ENCODE measurements at regions of chr10 and their contacts with region 1.

Region 1: GRCh38 chr10:71378336-71379117 is 18.2 kb upstream of the CDH23 start:
- DNase-seq: no peak
- ATAC-seq: no peak
- H3K4me3 ChIP-seq: no peak overlapping the region
- H3K27ac ChIP-seq: no peak overlapping the region
- H3K4me1 ChIP-seq: peaks cover 12% of the 10 kb centered on the region
- CTCF ChIP-seq: no peak
- EP300 ChIP-seq: no peak
- POLR2A ChIP-seq: no peak
- RAD21 ChIP-seq: no peak

Region 2: DNA sequence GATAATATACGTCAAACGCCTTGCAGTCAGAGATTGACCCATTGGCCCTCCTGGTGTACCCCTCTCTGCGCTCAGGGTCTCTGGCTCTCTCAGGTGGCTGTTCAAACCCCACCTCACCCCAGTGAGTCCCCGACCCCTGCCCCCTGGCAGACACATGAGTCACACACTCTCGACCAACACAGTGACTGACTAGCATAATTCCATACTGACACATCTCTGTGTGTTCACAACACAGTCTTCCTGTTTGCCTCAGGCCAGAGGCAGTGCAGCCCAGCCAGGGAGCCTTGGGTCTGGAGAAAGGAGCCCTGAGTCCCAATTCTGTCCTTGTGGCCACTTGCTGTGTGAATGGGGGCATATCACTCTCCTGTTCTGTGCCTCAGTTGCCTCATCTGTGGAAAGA is 859.8 kb before region 1 on chr10:
- CTCF ChIA-PET with region 1: no interaction called
- POLR2A ChIA-PET with region 1: no interaction called
- DNase-seq: peak in 1 of 2 experiments; percentile 18
- ATAC-seq: peak in 1 of 2 experiments; percentile 66; a peak in 3 of 6 replicates
- H3K4me3 ChIP-seq: no peak overlapping the region
- H3K27ac ChIP-seq: no peak overlapping the region
- H3K4me1 ChIP-seq: no peaks in the 10 kb centered on the region
- CTCF ChIP-seq: no peak
- EP300 ChIP-seq: no peak
- POLR2A ChIP-seq: no peak
- RAD21 ChIP-seq: no peak

Region 3: GRCh38 chr10:71366690-71367089 is 11.8 kb before region 1 on chr10:
- CTCF ChIA-PET with region 1: interaction called, 79 read pairs
- POLR2A ChIA-PET with region 1: interaction called, 23 read pairs
- DNase-seq: no peak
- ATAC-seq: no peak
- H3K4me3 ChIP-seq: no peak overlapping the region
- H3K27ac ChIP-seq: peak overlapping the region in 1 of 2 experiments; percentile 42; a peak in 1 of 6 replicates
- H3K4me1 ChIP-seq: peaks cover 17% of the 10 kb centered on the region
- CTCF ChIP-seq: no peak
- EP300 ChIP-seq: no peak
- POLR2A ChIP-seq: no peak
- RAD21 ChIP-seq: no peak

Region 4: GRCh38 chr10:71390461-71390835 is 11.9 kb after region 1 on chr10:
- CTCF ChIA-PET with region 1: interaction called, 88 read pairs
- POLR2A ChIA-PET with region 1: no interaction called
- DNase-seq: no peak
- ATAC-seq: no peak
- H3K4me3 ChIP-seq: no peak overlapping the region
- H3K27ac ChIP-seq: no peak overlapping the region
- H3K4me1 ChIP-seq: no peaks in the 10 kb centered on the region
- CTCF ChIP-seq: no peak
- EP300 ChIP-seq: no peak
- POLR2A ChIP-seq: no peak
- RAD21 ChIP-seq: no peak

Region 5: GRCh38 chr10:71396084-71396720 is 17.7 kb after region 1 on chr10:
- CTCF ChIA-PET with region 1: interaction called, 88 read pairs
- POLR2A ChIA-PET with region 1: no interaction called
- DNase-seq: peak; percentile 75 to 76
- ATAC-seq: peak; percentile 86 to 94
- H3K4me3 ChIP-seq: peak overlapping the region; percentile 58
- H3K27ac ChIP-seq: peak overlapping the region; percentile 71 to 91
- H3K4me1 ChIP-seq: peaks cover 7% of the 10 kb centered on the region; the same call in 1 of the 3 replicates
- CTCF ChIP-seq: peak; percentile 77
- EP300 ChIP-seq: no peak
- POLR2A ChIP-seq: no peak
- RAD21 ChIP-seq: peak; percentile 80 to 92

Measured in A549 (cell line).